Right ventricle myocardium inferior (tissue), 1 donor: ENCODE measurements at regions of chr5 and their contacts with region 1.

Region 1: DNA sequence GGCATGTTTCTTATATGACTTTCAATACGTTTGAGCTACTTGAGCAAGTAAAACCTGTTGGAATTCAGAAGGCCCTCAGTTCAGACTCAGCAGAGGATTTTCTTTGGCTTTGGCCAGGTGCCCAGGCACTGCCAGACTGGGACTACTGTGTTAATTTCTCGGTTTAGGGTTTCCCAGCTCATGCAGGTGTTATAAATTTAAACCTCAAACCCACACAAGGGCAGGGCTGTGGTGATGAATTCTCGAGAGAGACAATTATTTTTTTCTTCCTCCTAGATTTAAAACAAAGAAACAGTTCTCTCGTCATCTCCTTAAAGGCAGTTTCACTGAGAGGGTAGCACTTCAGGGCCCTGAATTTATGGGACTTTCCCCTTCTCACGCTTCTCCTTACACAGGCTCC is 406.0 kb upstream of the PIK3R1 start:
- DNase-seq: no peak
- ATAC-seq: no peak

Region 2: DNA sequence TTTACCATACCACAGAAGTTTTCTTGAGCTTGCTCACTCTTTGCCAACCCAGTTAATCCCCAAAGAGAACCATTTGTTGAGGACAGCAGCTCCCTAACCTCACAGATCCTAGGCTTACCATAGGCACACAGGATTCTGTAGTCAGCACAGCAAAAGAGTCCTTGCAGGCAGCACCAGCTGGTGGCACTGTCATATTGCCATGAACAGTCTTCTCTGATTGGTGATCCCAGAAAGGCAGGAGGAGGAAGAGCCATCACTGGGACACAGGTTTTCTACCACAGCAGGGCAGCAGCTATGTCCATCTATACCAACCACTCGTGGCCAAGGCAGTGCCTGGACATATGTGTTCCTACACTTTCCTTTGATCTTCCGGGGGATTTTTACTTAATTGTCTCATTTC is 315.9 kb before region 1 on chr5:
- intact Hi-C with region 1: loop called (anchors 5 kb)
- DNase-seq: peak; percentile 63
- ATAC-seq: peak; percentile 90

Region 3: GRCh38 chr5:68033961-68034571 is 224.5 kb after region 1 on chr5:
- intact Hi-C with region 1: loop called (anchors 10 kb)
- DNase-seq: no peak
- ATAC-seq: peak; percentile 32

Region 4: DNA sequence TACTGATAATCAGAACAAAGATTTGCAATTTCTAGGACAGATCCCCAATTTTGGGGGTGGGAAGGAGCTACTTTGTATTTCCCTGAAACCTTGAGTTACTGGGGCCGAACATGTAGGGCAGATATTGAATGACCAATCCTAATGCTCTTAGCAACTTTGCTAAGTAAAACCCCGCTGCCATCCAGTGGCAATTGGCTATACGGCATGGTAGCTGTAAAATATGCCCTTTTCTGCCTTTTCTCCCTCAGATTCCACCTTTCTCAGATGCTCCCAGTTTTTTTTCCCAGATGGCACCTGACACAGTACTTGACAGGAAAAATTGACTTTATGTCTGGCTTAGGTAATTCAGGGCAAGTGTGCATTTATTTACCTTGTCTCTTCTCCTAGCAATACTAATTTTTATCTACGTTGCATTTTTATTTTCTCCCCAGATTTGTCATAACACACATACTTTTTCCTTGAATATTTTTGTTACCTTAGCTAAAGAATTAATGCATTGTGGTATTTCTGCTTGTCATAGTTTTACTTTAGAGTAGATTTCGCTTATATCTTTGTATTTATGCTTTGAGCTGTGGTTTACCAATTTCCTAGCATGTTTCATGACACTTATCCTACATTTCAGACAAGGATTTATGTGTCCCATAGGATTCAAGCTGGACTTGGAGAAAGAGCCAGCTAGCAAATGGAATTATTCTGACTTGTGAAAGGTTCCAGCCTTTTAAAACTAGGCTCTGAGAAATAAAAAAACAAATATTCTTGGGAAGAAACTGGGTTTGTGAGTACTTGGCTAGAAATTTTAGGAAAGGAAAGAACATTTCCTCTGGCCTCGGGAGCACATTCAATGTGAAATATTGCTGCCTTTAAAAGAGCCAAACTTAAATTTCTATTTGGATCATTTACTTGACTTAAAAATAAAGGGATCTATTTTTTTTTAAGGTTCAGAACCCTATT is 443.4 kb after region 1 on chr5:
- intact Hi-C with region 1: loop called (anchors 5 kb)
- DNase-seq: no peak
- ATAC-seq: peak; percentile 59

Region 5: GRCh38 chr5:68272289-68272688 is 462.7 kb after region 1 on chr5:
- intact Hi-C with region 1: loop called (anchors 5 kb)
- DNase-seq: no peak
- ATAC-seq: no peak